ENCODE measurements at regions of chr6 and their contacts with region 1.

Region 1: GRCh38 chr6:41080621-41081020 is 7.8 kb downstream of the NFYA start:
- DNase-seq: peak; percentile 20
- ATAC-seq: peak; percentile 74
- H3K4me3 Mint-ChIP-seq: peak overlapping the region; percentile 45
- H3K27ac Mint-ChIP-seq: peak overlapping the region; percentile 91
- H3K4me1 Mint-ChIP-seq: peaks cover 62% of the 10 kb centered on the region
- H3K27me3 Mint-ChIP-seq: no peaks in the 10 kb centered on the region

Region 2: DNA sequence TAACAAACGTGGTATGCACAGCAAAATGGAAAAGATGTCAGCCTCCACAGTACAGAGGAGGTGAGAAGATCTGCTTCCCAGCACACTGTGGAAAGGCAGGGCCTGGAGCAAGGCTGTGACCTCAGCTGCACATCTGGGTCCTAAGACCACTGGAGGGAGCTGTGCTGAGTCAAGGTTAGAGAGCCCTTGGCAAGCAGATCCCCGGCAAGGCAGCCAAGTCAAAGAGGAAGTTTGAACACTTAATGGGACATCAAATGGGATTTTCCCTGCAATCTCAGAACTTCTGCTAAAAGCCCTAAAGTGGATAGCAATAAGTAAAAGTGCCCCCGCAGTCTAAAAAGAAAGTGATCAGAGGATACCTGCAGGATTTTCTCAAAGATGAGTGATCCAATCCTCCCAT is 81.1 kb before region 1 on chr6:
- CTCF ChIA-PET with region 1: no interaction called
- POLR2A ChIA-PET with region 1: no interaction called
- intact Hi-C with region 1: no loop called
- DNase-seq: peak; percentile 30
- ATAC-seq: no peak
- H3K4me3 Mint-ChIP-seq: no peak overlapping the region
- H3K27ac Mint-ChIP-seq: no peak overlapping the region
- H3K4me1 Mint-ChIP-seq: no peaks in the 10 kb centered on the region
- H3K27me3 Mint-ChIP-seq: peaks cover 20% of the 10 kb centered on the region

Region 3: GRCh38 chr6:41049521-41049920 is 31.1 kb before region 1 on chr6:
- CTCF ChIA-PET with region 1: interaction called, 3 read pairs
- POLR2A ChIA-PET with region 1: interaction called, 11 read pairs
- intact Hi-C with region 1: no loop called
- DNase-seq: no peak
- ATAC-seq: no peak
- H3K4me3 Mint-ChIP-seq: no peak overlapping the region
- H3K27ac Mint-ChIP-seq: no peak overlapping the region
- H3K4me1 Mint-ChIP-seq: peaks cover 17% of the 10 kb centered on the region
- H3K27me3 Mint-ChIP-seq: no peaks in the 10 kb centered on the region

Measured in activated CD4-positive, alpha-beta T cell treated with anti-CD3 and anti-CD28 coated beads for 36 hours (primary cell).